Activated CD4-positive, alpha-beta memory T cell treated with anti-CD3 and anti-CD28 coated beads for 36 hours (primary cell): ENCODE measurements at regions of chr5 and their contacts with region 1.

Region 1: GRCh38 chr5:598564-598890 is 13.6 kb upstream of the CEP72 start:
- DNase-seq: no peak
- H3K4me3 Mint-ChIP-seq: no peak overlapping the region
- H3K27ac Mint-ChIP-seq: no peak overlapping the region
- H3K4me1 Mint-ChIP-seq: peaks cover 3% of the 10 kb centered on the region
- H3K27me3 Mint-ChIP-seq: peaks cover 24% of the 10 kb centered on the region

Region 2: DNA sequence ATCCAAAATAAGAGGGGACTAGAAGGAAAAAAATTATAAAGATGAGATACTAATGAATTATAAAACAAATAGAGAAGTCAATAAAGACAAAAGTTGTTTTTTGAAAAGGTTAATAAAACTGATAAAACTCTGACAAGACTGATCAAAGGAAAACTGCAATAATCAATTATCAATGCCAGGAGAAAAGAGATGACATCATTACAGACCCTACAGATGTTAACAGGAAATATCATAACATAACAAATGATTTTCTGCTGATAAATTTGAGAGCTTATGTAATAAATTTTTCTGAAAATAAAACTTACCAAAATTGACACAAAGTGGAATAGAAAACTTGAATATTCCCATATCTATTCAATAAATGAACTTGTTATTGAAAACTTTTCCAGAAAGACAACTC is 20.7 kb before region 1 on chr5:
- CTCF ChIA-PET with region 1: no interaction called
- POLR2A ChIA-PET with region 1: no interaction called
- intact Hi-C with region 1: loop called (anchors 1 kb)
- DNase-seq: no peak
- H3K4me3 Mint-ChIP-seq: no peak overlapping the region
- H3K27ac Mint-ChIP-seq: no peak overlapping the region
- H3K4me1 Mint-ChIP-seq: no peaks in the 10 kb centered on the region
- H3K27me3 Mint-ChIP-seq: peaks cover 30% of the 10 kb centered on the region

Region 3: DNA sequence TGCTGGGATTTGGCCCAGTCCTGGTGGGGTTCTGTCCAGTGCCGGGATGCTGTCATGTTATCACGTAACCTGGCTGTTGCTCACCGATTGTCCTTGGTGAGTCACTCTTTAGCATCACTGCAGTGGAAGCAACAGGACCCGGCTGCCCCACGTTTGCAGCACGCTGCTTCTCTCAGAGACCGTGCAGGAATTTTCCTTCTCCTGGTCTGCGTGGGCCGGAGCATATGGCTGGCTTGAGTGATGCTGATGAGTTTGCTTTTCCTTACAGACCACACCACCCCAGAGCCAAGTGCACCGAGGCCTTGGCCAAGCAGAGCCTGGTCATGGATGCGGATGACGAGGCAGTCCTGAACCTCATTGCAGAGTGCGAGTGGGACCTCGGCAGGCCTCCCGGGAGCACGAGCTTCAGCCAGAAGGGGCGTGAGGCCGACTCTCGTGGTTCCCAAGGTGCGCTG is 35.0 kb after region 1 on chr5:
- CTCF ChIA-PET with region 1: no interaction called
- POLR2A ChIA-PET with region 1: no interaction called
- intact Hi-C with region 1: no loop called
- DNase-seq: no peak
- H3K4me3 Mint-ChIP-seq: no peak overlapping the region
- H3K27ac Mint-ChIP-seq: no peak overlapping the region
- H3K4me1 Mint-ChIP-seq: no peaks in the 10 kb centered on the region
- H3K27me3 Mint-ChIP-seq: no peaks in the 10 kb centered on the region

Region 4: DNA sequence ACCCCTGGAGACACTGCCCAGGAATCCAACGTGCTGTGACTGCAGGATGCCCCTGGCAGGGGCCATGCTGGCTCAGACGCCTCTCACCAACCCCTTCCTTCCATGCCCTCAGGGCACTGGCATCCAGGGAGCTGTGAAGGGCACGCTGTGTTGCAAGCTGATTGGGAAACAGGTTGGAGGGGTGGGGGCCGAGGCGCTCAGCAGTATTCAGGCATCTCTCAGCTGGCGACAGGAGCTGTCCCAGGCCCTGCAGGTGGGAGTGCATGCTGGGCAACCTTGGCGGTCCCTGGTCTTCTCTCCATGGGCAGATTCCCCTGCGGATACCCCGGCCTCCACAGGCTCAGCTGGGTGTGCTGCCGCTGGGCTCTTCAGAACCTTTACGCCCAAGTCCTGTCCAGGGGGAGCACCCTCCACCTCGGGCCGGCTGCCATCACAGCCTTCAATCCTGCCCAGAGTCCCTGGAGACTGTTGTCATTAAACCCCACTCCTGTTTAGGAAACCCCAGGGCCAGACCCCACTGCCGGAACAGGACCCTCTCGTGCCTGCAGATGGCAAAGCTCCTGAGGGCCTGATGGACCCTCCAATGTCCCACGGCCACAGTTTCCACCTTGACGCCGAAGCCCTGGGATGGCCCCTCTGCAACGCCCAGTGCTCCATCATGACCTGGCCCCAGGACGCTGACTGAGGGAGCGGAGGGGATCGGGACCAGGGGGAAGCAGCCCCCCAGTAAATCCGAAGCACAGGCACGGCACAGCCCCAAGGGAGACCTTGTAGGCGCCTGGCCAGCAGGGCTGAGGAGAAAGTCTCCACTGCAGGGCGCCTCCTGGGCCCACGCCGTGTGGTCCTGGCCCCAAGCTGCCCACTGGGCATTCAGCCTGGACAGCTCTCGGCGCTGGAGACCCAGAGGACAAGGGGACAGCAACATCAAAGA is 85.3 kb after region 1 on chr5:
- CTCF ChIA-PET with region 1: no interaction called
- POLR2A ChIA-PET with region 1: no interaction called
- intact Hi-C with region 1: no loop called
- DNase-seq: no peak
- H3K4me3 Mint-ChIP-seq: no peak overlapping the region
- H3K27ac Mint-ChIP-seq: no peak overlapping the region
- H3K4me1 Mint-ChIP-seq: no peaks in the 10 kb centered on the region
- H3K27me3 Mint-ChIP-seq: no peaks in the 10 kb centered on the region